Activated CD4-positive, alpha-beta T cell treated with anti-CD3 and anti-CD28 coated beads, Interleukin-2, amount 10 ng/mL, durations not matched to agents 7 days and 5 days (primary cell): ENCODE measurements at regions of chr2 and their contacts with region 1.

Region 1: GRCh38 chr2:213125646-213126347 is 25.6 kb downstream of the IKZF2 start:
- DNase-seq: no peak
- H3K4me3 Mint-ChIP-seq: no peak overlapping the region
- H3K27ac Mint-ChIP-seq: no peak overlapping the region
- H3K4me1 Mint-ChIP-seq: peaks cover 13% of the 10 kb centered on the region
- H3K27me3 Mint-ChIP-seq: peaks cover 2% of the 10 kb centered on the region

Region 2: DNA sequence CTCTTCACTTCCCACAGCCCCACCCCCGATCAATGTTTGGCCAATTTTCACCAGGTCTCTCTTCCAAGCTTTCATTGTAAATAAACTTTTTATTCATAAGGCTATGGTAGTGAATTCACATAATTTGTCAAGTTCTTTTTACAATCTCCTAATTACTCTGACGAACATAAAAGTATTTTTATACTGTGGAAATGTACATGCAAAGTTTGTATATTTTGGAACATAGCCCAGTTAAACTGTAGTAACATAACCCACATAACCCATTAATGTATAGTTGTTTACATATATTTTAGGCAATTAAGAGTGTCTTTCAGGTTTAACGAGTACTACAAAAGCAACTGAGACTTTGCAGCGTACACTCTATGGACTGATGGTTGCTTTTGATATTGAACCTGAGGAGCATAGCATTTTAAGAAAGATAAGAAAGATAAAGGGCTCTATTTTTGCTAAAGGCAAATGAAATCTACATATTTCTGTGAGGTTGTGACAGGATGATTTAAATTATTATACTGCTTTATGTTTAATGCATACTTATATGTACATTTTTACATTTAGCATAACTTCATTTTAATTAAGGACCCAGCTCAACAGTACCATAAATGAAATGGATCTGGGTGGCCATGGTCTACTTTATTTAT is 358.8 kb before region 1 on chr2:
- CTCF ChIA-PET with region 1: no interaction called
- POLR2A ChIA-PET with region 1: interaction called, 16 read pairs
- DNase-seq: no peak
- H3K4me3 Mint-ChIP-seq: no peak overlapping the region
- H3K27ac Mint-ChIP-seq: no peak overlapping the region
- H3K4me1 Mint-ChIP-seq: no peaks in the 10 kb centered on the region
- H3K27me3 Mint-ChIP-seq: no peaks in the 10 kb centered on the region